H1 (cell line): ENCODE measurements at regions of chr2 and their contacts with region 1.

Region 1: DNA sequence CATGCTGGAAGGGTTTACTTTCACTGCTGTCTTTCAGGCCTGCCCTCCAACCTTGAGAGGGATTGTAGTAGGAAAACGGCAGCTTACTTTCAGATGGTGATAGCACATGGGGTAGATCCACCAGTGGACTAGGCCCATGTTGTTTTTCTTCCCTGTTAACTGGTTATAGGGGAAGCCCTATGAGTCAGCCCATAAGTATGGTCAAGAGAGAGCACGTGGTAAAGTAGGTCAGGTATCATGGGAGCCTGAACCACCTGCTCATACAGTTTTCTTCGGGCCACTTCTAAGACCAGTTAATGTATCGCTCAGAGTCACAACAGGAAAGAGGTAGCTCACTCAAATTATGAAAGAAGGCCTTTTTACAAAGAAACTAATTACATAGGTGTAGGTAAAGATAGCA is 33.0 kb downstream of the PDK1 start:
- DNase-seq: no peak
- H3K4me3 ChIP-seq: no peak overlapping the region
- H3K27ac ChIP-seq: no peak overlapping the region
- H3K4me1 ChIP-seq: no peaks in the 10 kb centered on the region
- H3K27me3 ChIP-seq: no peaks in the 10 kb centered on the region
- CTCF ChIP-seq: no peak
- EP300 ChIP-seq: no peak
- POLR2A ChIP-seq: no peak
- RAD21 ChIP-seq: no peak

Region 2: GRCh38 chr2:172606285-172606684 is 17.4 kb after region 1 on chr2:
- CTCF ChIA-PET with region 1: interaction called, 22 read pairs
- POLR2A ChIA-PET with region 1: no interaction called
- DNase-seq: no peak
- H3K4me3 ChIP-seq: no peak overlapping the region
- H3K27ac ChIP-seq: no peak overlapping the region
- H3K4me1 ChIP-seq: no peaks in the 10 kb centered on the region
- H3K27me3 ChIP-seq: no peaks in the 10 kb centered on the region
- CTCF ChIP-seq: no peak
- EP300 ChIP-seq: no peak
- POLR2A ChIP-seq: no peak
- RAD21 ChIP-seq: no peak

Region 3: DNA sequence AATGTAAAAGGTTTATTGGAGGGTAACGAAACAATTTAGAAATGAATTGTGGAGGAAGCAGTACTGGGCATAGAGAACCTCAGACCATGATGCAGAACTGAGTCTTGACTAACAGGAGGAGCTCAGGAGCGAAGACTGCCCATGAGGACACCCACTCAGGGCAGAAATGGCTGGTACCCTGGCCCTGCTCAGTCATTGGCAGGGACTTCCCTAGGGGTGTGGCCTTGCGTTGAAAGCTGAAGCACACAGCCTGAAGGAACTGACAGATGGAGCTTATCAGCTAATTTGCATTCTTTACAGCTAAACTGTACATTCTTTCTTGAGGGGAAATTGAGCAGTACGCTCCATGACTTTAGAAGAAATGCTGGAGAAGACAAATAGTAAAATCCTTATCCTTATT is 24.1 kb after region 1 on chr2:
- CTCF ChIA-PET with region 1: interaction called, 24 read pairs
- POLR2A ChIA-PET with region 1: no interaction called
- DNase-seq: no peak
- H3K4me3 ChIP-seq: no peak overlapping the region
- H3K27ac ChIP-seq: no peak overlapping the region
- H3K4me1 ChIP-seq: no peaks in the 10 kb centered on the region
- H3K27me3 ChIP-seq: no peaks in the 10 kb centered on the region
- CTCF ChIP-seq: no peak
- EP300 ChIP-seq: no peak
- POLR2A ChIP-seq: no peak
- RAD21 ChIP-seq: no peak